Activated T-helper 1 cell treated with anti-CD3 and anti-CD28 coated beads, Interleukin-12 subunit alpha, Interleukin-12 subunit beta, Interleukin-2, Interleukin-4 antibody, amounts not matched to agents 30 ng/mL and 10 ng/mL and 1 ng/mL, durations not matched to agents 14 hours and 24 hours and 36 hours (primary cell): ENCODE measurements at regions of chr1 and their contacts with region 1.

Region 1: DNA sequence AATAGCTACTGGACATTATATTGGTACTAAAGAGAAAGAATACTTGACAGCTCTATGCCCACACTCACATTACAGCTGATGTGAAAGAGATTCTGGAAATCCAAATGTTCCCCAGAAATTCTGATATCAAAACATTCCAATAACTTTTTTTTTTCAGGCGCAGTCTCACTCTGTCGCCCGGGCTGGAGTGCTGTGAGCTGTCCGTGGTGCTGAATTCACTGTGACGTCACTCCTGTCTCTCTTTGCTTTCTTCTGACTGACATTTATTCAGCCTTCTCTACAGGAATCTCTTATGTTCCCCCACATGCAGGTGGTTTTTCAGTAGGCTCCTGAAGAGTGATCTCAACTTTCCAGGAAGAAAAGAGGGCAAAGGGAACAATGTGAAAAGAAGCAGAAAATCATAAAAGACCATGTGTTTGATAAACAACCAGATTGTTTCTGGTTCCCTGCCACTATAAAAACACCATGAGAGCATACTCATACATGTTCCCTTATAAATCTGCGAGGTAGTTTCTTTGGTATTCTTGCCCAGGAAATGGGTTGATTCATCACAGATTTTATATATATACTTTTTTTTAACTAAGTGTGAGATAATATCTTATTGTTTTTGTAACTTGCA is 6.2 kb downstream of the S100A7A start:
- DNase-seq: peak; percentile 50
- H3K4me3 Mint-ChIP-seq: no peak overlapping the region
- H3K27ac Mint-ChIP-seq: no peak overlapping the region
- H3K4me1 Mint-ChIP-seq: no peaks in the 10 kb centered on the region
- H3K27me3 Mint-ChIP-seq: peaks cover 3% of the 10 kb centered on the region

Region 2: DNA sequence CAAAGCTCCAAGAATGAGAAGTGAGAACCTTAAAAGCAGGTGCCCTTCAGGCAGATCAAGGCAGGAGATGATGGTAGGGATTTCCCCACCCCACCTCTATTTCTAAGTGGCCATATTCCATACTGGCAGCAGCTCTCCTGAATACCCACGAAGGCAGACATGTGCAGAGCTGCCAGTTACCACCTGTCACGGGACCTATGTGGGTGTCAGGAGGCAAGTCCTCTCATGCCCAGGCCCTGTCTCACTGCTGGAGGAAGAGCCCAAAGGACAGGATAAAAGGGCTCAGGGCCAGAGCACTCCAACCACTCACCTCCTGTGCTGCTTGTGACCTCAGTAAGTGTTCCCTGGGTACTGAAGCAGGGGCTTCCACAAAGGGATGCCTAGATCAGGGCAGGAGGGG is 611.5 kb before region 1 on chr1:
- intact Hi-C with region 1: no loop called
- DNase-seq: no peak
- H3K4me3 Mint-ChIP-seq: no peak overlapping the region
- H3K27ac Mint-ChIP-seq: no peak overlapping the region
- H3K4me1 Mint-ChIP-seq: no peaks in the 10 kb centered on the region
- H3K27me3 Mint-ChIP-seq: peaks cover 2% of the 10 kb centered on the region

Region 3: DNA sequence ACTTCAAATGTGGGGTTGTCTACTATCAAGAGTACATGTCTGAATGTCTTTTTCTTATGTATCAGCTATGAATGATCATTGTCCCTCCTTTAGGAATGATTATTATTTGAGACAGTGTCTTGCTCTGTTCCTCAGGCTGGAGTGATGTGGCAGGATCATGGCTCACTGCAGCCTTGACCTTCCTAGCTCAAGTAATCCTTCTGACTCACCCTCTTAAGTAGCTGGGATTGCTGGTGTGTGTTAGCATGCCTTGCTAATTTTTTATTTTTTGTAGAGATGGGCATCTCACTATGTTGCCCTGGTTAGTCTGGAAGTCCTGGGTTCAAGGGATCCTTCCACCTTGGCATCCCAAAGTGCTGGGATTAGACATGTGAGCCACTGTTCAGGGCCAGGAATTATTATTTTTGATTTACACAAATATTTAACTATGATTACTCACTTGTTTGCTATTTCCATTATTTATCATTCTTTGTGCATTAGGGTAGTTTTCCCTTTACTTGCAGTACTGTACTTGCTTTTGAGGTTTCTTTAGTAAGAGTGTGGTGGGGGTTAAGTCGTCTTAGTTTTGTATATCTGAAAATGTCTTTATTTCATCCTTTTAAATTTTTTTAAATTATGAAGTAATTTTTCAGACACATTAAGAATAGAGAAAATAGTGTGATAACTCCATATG is 25.1 kb after region 1 on chr1:
- intact Hi-C with region 1: loop called (anchors 1 kb)
- DNase-seq: no peak
- H3K4me3 Mint-ChIP-seq: no peak overlapping the region
- H3K27ac Mint-ChIP-seq: no peak overlapping the region
- H3K4me1 Mint-ChIP-seq: no peaks in the 10 kb centered on the region
- H3K27me3 Mint-ChIP-seq: peaks cover 3% of the 10 kb centered on the region

Region 4: DNA sequence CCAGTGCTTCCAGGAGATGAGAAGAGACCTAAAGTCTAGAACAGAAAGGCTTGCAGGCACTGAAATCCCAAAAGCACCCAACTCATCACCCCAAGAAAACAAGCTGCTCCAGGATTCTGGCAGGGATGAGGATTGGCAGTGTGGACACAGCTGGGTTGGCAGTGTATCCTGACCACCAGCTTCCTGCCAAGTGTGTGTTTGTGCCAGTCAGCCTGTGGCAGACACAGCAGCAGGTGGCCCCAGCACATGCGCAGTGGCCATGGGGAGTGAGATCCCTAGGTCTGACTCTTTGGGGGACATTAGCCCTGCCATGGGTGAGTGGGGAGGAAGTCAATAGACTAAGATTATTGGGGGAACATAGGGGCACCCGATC is 227.3 kb after region 1 on chr1:
- intact Hi-C with region 1: no loop called
- DNase-seq: no peak
- H3K4me3 Mint-ChIP-seq: no peak overlapping the region
- H3K27ac Mint-ChIP-seq: no peak overlapping the region
- H3K4me1 Mint-ChIP-seq: peaks cover 14% of the 10 kb centered on the region
- H3K27me3 Mint-ChIP-seq: no peaks in the 10 kb centered on the region